ENCODE measurements at regions of chr16 and their contacts with region 1.

Region 1: DNA sequence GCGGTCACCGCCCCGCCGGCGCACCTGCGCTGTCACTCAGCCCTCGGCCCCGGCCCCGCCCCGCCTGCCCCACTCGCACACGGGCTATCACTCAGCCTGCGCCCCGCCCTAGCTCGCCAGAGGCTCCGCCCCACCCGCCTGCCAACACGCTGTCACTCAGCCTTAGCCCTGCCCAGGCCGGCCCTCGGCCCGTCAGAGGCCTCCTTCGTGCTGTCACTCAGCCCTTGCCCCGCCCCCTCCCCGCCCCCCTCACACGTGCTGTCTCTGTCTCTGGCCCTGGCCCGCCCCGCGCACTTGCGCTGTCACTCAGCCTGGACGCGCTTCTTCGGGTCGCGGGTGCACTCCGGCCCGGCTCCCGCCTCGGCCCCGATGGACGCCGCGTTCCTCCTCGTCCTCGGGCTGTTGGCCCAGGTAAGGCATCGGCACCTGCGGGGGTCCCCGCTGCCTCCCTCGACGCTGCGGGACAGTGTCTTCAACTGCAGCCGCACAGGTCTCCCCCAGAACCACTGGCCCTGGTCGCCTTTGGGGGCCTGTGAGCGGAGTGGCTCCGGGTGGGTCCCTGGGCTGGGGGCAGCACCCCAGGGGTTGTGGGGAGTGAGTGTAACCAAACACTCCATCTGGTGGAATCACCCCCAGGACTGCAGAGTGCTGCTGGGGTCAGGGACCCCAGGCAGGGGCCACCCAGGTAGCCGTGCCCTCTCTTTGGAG is at the start of gene CDH15:
- DNase-seq: peak; percentile 79 to 96 (median 91)
- ATAC-seq: peak; percentile 97
- H3K4me3 ChIP-seq: peak within 1 kb of the TSS; percentile 51
- H3K4me3 Mint-ChIP-seq: peak within 1 kb of the TSS; percentile 65 to 88 (median 76)
- H3K27ac ChIP-seq: no peak within 1 kb of the TSS
- H3K27ac Mint-ChIP-seq: peak within 1 kb of the TSS in 5 of 9 donors; percentile 51 to 86 (median 75)
- H3K4me1 ChIP-seq: peaks cover 8 to 21% of the 10 kb centered on the region in 2 donors
- H3K4me1 Mint-ChIP-seq: peaks cover 6 to 10% (median 7%) of the 10 kb centered on the region in 7 donors
- H3K27me3 ChIP-seq: no peaks in the 10 kb centered on the region
- H3K27me3 Mint-ChIP-seq: peaks cover 0 to 6% (median 0%) of the 10 kb centered on the region in 5 donors
- total RNA-seq, gene CDH15: not detected

Region 2: GRCh38 chr16:88737298-88738150 is 434.1 kb before region 1 on chr16:
- CTCF ChIA-PET with region 1: no interaction called
- POLR2A ChIA-PET with region 1: no interaction called
- intact Hi-C with region 1: loop called in 1 of 2 experiments (anchors 2 kb)
- DNase-seq: peak; percentile 55 to 81 (median 65)
- ATAC-seq: peak; percentile 95
- H3K4me3 ChIP-seq: no peak overlapping the region
- H3K4me3 Mint-ChIP-seq: peak overlapping the region in 1 of 10 donors; percentile 34
- H3K27ac ChIP-seq: no peak overlapping the region
- H3K27ac Mint-ChIP-seq: no peak overlapping the region
- H3K4me1 ChIP-seq: peaks cover 3 to 5% of the 10 kb centered on the region in 2 donors
- H3K4me1 Mint-ChIP-seq: peaks cover 0 to 8% (median 0%) of the 10 kb centered on the region in 7 donors
- H3K27me3 ChIP-seq: no peaks in the 10 kb centered on the region
- H3K27me3 Mint-ChIP-seq: no peaks in the 10 kb centered on the region

Region 3: DNA sequence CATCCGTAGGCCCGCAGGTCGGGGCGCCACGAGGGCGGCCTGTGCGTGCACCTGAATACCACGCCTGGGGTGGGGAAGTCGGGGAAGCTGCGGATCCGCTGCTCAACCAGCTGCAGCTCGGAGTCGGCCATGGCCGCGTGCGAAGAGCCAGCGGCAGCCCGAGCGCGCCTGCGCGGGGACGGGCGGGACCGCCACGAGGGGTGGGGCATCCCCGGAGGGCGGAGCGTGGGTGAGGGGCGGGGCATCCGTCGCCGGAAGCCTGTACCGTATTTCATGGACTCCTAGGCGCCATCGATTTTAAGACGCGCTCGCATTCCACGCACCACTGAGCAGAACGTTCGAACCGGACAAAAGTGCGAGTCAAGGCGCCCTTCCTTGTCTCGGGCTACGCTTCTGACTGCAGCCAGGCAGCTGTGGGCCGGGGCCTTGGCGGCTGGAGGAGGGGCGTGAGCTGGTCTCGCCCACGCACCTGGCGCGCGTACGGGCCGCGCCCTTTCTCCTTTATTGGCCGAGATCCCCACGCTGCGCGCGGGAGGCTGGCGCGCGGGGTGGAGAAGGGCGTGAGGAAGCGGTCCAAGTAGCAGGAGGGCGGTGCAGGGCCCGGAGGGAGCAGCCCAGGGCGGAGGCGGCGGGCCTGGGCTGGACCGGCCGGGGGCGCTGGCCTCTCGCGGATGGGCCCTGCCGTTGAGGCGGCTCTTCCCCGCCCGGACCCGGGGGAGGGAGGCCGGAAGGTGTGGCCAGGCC is 359.7 kb before region 1 on chr16 and contains the start of gene APRT:
- CTCF ChIA-PET with region 1: no interaction called
- POLR2A ChIA-PET with region 1: no interaction called
- intact Hi-C with region 1: loop called (anchors 1 kb)
- DNase-seq: peak; percentile 92 to 100 (median 98)
- ATAC-seq: peak; percentile 95
- H3K4me3 ChIP-seq: peak within 1 kb of the TSS; percentile 97
- H3K4me3 Mint-ChIP-seq: peak within 1 kb of the TSS; percentile 92 to 99 (median 96)
- H3K27ac ChIP-seq: peak within 1 kb of the TSS; percentile 84
- H3K27ac Mint-ChIP-seq: peak within 1 kb of the TSS; percentile 79 to 98 (median 95)
- H3K4me1 ChIP-seq: peaks cover 8 to 11% of the 10 kb centered on the region in 2 donors
- H3K4me1 Mint-ChIP-seq: peaks cover 0 to 26% (median 12%) of the 10 kb centered on the region in 7 donors
- H3K27me3 ChIP-seq: no peaks in the 10 kb centered on the region
- H3K27me3 Mint-ChIP-seq: no peaks in the 10 kb centered on the region
- total RNA-seq, gene APRT: 134 to 178 (median 161) TPM

Region 4: DNA sequence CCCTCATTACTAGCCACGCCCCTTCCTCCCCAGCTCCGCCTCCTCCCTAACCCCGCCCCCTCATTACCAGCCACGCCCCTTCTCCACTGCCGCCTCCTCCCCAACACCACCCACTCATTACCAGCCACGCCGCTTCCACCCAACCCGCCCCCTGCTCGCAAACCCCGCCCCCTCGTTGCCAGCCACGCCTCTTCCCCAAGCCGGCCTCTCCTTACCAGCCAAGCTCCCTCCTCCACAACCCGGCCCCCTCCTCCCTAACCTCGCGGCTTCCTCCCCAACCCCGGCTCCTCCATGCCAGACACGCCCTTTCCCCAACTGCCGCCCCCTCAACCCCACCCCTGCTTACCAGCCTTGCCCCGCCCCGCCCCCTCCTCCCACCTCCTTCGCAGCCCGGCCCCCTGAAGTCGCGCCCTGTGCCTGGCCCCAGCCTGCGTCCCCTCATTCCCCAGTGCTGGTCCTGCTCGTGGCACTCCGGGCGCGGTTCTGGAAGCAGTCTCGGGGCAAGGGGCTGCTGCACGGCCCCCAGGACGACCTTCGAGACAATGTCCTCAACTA is 21.5 kb after region 1 on chr16:
- CTCF ChIA-PET with region 1: no interaction called
- POLR2A ChIA-PET with region 1: no interaction called
- intact Hi-C with region 1: loop called (anchors 1 kb)
- DNase-seq: peak in 6 of 9 donors; percentile 45 to 61 (median 52)
- ATAC-seq: no peak
- H3K4me3 ChIP-seq: no peak overlapping the region
- H3K4me3 Mint-ChIP-seq: peak overlapping the region in 3 of 10 donors; percentile 6 to 47 (median 25)
- H3K27ac ChIP-seq: no peak overlapping the region
- H3K27ac Mint-ChIP-seq: no peak overlapping the region
- H3K4me1 ChIP-seq: no peaks in the 10 kb centered on the region
- H3K4me1 Mint-ChIP-seq: peaks cover 0 to 5% (median 0%) of the 10 kb centered on the region in 7 donors
- H3K27me3 ChIP-seq: no peaks in the 10 kb centered on the region
- H3K27me3 Mint-ChIP-seq: peaks cover 0 to 8% (median 2%) of the 10 kb centered on the region in 5 donors

Region 5: DNA sequence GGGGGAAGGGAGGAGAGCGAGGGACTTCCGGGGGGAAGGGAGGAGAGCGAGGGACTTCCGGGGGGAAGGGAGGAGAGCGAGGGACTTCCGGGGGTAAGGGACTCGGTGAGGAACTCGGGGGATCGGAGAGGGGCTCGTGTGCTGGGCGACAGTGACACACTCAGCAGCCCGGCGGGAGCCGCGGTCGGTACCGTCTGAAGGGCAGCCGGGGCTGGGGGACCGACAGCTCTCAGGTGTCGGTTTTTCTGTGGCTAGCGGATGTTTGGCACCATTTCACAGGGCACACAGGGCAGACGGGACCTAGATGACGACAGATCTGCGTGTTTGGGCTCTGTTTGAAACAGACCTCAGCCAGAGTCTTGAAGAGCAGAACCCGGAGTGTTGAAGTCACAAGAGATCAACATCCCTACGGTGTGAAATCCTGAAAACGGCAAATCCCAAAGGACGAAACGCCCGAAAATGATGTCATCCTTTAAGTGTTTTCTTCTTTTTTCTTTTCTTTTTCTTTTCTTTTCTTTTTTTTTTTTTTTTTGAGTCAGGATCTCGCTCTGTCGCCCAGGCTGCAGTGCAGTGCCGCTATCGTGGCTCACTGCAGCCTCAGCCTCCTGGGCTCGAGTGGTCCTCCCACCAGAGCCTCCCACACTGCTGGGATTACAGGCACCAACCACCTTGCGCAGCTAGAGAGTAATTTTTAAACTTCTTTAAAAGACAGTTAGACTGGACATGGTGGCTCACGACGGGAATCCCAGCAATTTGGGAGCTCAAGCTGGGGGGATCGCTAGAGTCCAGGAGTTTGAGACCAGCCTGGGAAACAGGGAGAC is 69.8 kb after region 1 on chr16:
- CTCF ChIA-PET with region 1: no interaction called
- POLR2A ChIA-PET with region 1: no interaction called
- intact Hi-C with region 1: loop called (anchors 1 to 2 kb)
- DNase-seq: peak; percentile 75 to 95 (median 93)
- ATAC-seq: peak; percentile 86
- H3K4me3 ChIP-seq: peak overlapping the region; percentile 68
- H3K4me3 Mint-ChIP-seq: peak overlapping the region; percentile 83 to 100 (median 96)
- H3K27ac ChIP-seq: peak overlapping the region; percentile 91
- H3K27ac Mint-ChIP-seq: peak overlapping the region; percentile 94 to 100 (median 99)
- H3K4me1 ChIP-seq: peaks cover 5 to 6% of the 10 kb centered on the region in 2 donors
- H3K4me1 Mint-ChIP-seq: peaks cover 0 to 31% (median 18%) of the 10 kb centered on the region in 7 donors
- H3K27me3 ChIP-seq: no peaks in the 10 kb centered on the region
- H3K27me3 Mint-ChIP-seq: no peaks in the 10 kb centered on the region

Region 6: GRCh38 chr16:89325861-89326471 is 154.3 kb after region 1 on chr16:
- CTCF ChIA-PET with region 1: no interaction called
- POLR2A ChIA-PET with region 1: no interaction called
- intact Hi-C with region 1: no loop called
- DNase-seq: no peak
- ATAC-seq: peak; percentile 60
- H3K4me3 ChIP-seq: no peak overlapping the region
- H3K4me3 Mint-ChIP-seq: peak overlapping the region; percentile 34 to 71 (median 47)
- H3K27ac ChIP-seq: peak overlapping the region; percentile 9
- H3K27ac Mint-ChIP-seq: peak overlapping the region; percentile 41 to 88 (median 81)
- H3K4me1 ChIP-seq: peaks cover 54 to 80% of the 10 kb centered on the region in 2 donors
- H3K4me1 Mint-ChIP-seq: peaks cover 53 to 93% (median 82%) of the 10 kb centered on the region in 7 donors
- H3K27me3 ChIP-seq: no peaks in the 10 kb centered on the region
- H3K27me3 Mint-ChIP-seq: no peaks in the 10 kb centered on the region

Measured in naive thymus-derived CD4-positive, alpha-beta T cell (primary cell).